ENCODE measurements at regions of chr7 and their contacts with region 1.

Region 1: DNA sequence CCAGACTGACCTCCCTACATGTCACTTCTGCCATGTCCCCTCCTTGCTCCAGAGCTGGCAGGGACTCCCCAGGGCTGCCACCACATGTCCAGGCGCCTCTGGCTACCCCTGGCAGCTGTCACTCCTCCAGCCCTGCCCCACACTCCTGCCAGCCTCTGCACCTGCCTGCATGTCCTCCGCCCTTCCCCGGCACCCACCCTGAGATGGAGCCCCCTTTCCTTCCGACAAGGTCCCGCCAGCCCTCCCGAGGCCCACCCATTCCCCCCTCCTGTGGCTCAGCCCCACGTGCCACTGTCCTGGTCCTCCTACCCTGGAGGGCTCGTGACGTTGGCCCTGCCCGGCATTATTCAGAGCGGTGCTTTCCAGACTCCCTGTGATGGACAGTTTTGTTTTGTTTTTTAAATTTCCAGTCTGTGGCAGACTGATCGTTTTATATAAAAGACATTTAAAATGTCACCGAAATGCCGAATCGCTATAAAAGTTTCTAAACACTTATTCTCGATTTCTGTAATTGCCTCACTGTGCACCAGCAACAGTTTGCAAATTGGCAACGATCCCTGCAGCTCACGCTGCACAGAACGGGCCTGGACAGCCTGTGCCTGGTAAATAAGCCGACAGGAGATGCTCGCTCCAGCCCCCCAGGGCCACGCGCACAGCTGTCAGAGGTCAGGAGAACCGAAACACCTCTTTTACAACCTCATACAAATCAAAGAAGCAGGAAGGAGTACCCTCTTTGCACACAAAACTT is 111.1 kb upstream of the SH2B2 start:
- DNase-seq: no peak
- H3K4me3 ChIP-seq: no peak overlapping the region
- H3K27ac ChIP-seq: no peak overlapping the region
- H3K4me1 ChIP-seq: no peaks in the 10 kb centered on the region
- H3K27me3 ChIP-seq: no peaks in the 10 kb centered on the region
- CTCF ChIP-seq: no peak
- POLR2A ChIP-seq: no peak

Region 2: GRCh38 chr7:102189756-102190155 is 14.2 kb after region 1 on chr7:
- CTCF ChIA-PET with region 1: interaction called, 3 read pairs
- POLR2A ChIA-PET with region 1: interaction called, 12 read pairs
- dilution Hi-C with region 1: no loop called
- intact Hi-C with region 1: no loop called
- DNase-seq: no peak
- H3K4me3 ChIP-seq: no peak overlapping the region
- H3K27ac ChIP-seq: no peak overlapping the region
- H3K4me1 ChIP-seq: no peaks in the 10 kb centered on the region
- H3K27me3 ChIP-seq: no peaks in the 10 kb centered on the region
- CTCF ChIP-seq: no peak
- POLR2A ChIP-seq: no peak